CD8-positive, alpha-beta T cell (primary cell): ENCODE measurements at regions of chr13 and their contacts with region 1.

Region 1: GRCh38 chr13:23766283-23766682 is 122.9 kb downstream of the MIPEP start:
- DNase-seq: no peak
- ATAC-seq: no peak
- H3K4me3 ChIP-seq: no peak overlapping the region
- H3K4me3 Mint-ChIP-seq: no peak overlapping the region
- H3K27ac ChIP-seq: no peak overlapping the region
- H3K27ac Mint-ChIP-seq: no peak overlapping the region
- H3K4me1 ChIP-seq: no peaks in the 10 kb centered on the region
- H3K4me1 Mint-ChIP-seq: no peaks in the 10 kb centered on the region
- H3K27me3 ChIP-seq: no peaks in the 10 kb centered on the region
- H3K27me3 Mint-ChIP-seq: no peaks in the 10 kb centered on the region
- CTCF ChIP-seq: no peak

Region 2: DNA sequence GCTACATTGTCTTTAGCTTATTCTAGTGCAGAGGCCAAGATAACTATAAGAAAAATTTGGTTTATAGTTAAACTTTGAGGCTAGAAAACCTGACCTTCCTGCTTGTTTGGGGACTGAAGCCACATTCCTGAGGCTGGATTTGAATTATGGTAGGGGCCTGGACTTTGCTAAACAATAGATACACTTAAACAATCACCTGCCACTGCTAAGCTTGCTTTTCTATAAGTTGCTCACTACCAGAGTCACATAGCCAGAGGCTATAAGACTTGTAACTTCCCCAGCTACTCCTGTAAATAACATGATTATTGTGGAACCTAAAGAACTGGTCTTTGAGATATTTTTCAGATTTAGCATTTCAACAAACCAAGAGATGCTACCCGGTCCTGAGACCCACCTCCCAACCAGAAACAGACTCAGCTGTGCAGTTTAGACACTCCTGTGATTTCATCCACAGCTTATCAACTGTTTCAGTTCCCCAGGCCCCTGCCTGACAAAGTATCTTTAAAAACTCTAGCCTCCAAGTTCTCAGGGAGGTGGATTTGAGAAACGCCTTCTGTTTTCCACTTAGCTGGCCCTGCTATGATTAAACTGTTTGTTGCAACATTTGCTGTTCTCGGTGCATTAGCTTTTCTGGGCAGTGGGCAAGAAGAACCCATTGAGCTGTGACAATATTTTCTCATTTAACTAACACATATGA is 45.2 kb after region 1 on chr13:
- CTCF ChIA-PET with region 1: no interaction called
- POLR2A ChIA-PET with region 1: no interaction called
- intact Hi-C with region 1: no loop called
- DNase-seq: no peak
- ATAC-seq: no peak
- H3K4me3 ChIP-seq: no peak overlapping the region
- H3K4me3 Mint-ChIP-seq: no peak overlapping the region
- H3K27ac ChIP-seq: no peak overlapping the region
- H3K27ac Mint-ChIP-seq: no peak overlapping the region
- H3K4me1 ChIP-seq: no peaks in the 10 kb centered on the region
- H3K4me1 Mint-ChIP-seq: peaks cover 1% of the 10 kb centered on the region
- H3K27me3 ChIP-seq: no peaks in the 10 kb centered on the region
- H3K27me3 Mint-ChIP-seq: no peaks in the 10 kb centered on the region
- CTCF ChIP-seq: no peak

Region 3: DNA sequence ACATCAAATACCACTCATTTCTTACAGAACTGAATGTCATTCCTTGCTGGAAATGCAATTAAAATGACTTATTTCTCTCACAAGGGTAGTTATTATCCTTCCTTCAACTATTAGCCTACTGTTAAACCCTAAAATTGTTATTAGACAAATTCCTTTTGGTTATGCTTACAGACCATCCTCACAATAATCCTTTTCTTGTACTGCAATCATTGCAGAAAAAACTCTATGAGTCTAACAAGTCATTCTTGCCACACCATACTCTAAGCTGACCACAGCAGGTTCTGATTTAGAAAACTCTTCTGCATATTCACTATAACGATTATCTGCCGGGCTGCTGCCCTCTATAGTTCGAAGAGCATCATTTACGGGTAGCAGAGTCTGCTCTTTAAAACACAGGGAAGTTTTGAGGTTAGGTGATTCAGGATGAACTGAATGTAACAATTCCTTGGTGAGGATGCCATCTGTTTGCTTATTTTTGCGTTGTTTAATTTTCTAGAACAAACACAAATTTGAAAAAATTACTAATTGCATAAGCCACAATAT is 1482.8 kb after region 1 on chr13:
- CTCF ChIA-PET with region 1: no interaction called
- POLR2A ChIA-PET with region 1: no interaction called
- intact Hi-C with region 1: loop called in 1 of 2 experiments (anchors 5 kb)
- DNase-seq: no peak
- ATAC-seq: no peak
- H3K4me3 ChIP-seq: no peak overlapping the region
- H3K4me3 Mint-ChIP-seq: no peak overlapping the region
- H3K27ac ChIP-seq: no peak overlapping the region
- H3K27ac Mint-ChIP-seq: no peak overlapping the region
- H3K4me1 ChIP-seq: no peaks in the 10 kb centered on the region
- H3K4me1 Mint-ChIP-seq: no peaks in the 10 kb centered on the region
- H3K27me3 ChIP-seq: no peaks in the 10 kb centered on the region
- H3K27me3 Mint-ChIP-seq: no peaks in the 10 kb centered on the region
- CTCF ChIP-seq: no peak